Prostate gland (tissue), 2 donors: ENCODE measurements at regions of chr7 and their contacts with region 1.

Region 1: DNA sequence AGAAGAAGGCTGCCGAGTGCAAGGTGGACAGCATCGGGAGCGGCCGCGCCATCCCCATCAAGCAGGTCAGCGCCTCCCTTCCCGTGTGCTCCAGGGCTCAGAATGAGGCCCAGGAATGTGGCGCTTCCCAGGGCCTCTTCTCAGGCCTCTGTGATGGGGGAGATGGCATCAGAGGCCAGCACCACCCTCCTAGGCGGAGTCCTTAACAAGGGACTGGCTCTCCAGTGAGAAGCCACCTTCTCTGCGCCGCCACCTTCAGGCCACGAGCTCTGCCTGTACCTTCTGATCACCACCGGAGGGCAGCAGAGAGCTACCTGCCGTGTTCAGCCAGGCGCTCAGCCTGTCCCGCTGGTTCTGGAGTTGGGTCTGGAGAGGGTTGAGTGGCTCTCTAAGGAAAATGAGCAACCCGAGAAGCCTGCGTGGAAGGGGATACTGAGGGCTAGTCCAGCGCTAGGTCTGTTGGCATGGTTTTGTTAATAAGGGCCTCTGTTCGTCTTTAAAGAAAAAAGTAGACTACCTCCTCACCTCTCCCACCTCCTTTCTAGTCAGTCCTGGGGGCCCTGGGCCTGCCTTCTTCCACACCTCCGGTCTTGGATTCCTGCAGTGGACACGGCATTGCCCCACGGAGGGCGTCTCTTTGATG is 37.7 kb downstream of the AGAP3 start:
- DNase-seq: peak; percentile 91
- H3K4me3 ChIP-seq: no peak overlapping the region
- H3K27ac ChIP-seq: no peak overlapping the region
- H3K4me1 ChIP-seq: peaks cover 7% of the 10 kb centered on the region
- H3K27me3 ChIP-seq: no peaks in the 10 kb centered on the region
- CTCF ChIP-seq: peak; percentile 96 to 99 (median 98)
- POLR2A ChIP-seq: no peak

Region 2: GRCh38 chr7:149714050-149714909 is 1409.7 kb before region 1 on chr7:
- intact Hi-C with region 1: no loop called
- DNase-seq: peak; percentile 87
- H3K4me3 ChIP-seq: peak overlapping the region; percentile 62 to 79
- H3K27ac ChIP-seq: peak overlapping the region; percentile 47 to 77
- H3K4me1 ChIP-seq: peaks cover 4% of the 10 kb centered on the region
- H3K27me3 ChIP-seq: no peaks in the 10 kb centered on the region
- CTCF ChIP-seq: no peak
- POLR2A ChIP-seq: no peak

Region 3: GRCh38 chr7:151172273-151173141 is 48.6 kb after region 1 on chr7:
- intact Hi-C with region 1: loop called (anchors 2 kb)
- DNase-seq: peak; percentile 63
- H3K4me3 ChIP-seq: no peak overlapping the region
- H3K27ac ChIP-seq: no peak overlapping the region
- H3K4me1 ChIP-seq: no peaks in the 10 kb centered on the region
- H3K27me3 ChIP-seq: no peaks in the 10 kb centered on the region
- CTCF ChIP-seq: peak; percentile 100
- POLR2A ChIP-seq: peak; percentile 24

Region 4: GRCh38 chr7:151393031-151393977 is 269.4 kb after region 1 on chr7:
- intact Hi-C with region 1: no loop called
- DNase-seq: no peak
- H3K4me3 ChIP-seq: no peak overlapping the region
- H3K27ac ChIP-seq: no peak overlapping the region
- H3K4me1 ChIP-seq: no peaks in the 10 kb centered on the region
- H3K27me3 ChIP-seq: no peaks in the 10 kb centered on the region
- CTCF ChIP-seq: no peak
- POLR2A ChIP-seq: no peak